H1 (cell line): ENCODE measurements at regions of chr1 and their contacts with region 1.

Region 1: GRCh38 chr1:27090911-27091310 is 64.0 kb downstream of the SLC9A1 start:
- DNase-seq: no peak
- H3K4me3 ChIP-seq: no peak overlapping the region
- H3K27ac ChIP-seq: no peak overlapping the region
- H3K4me1 ChIP-seq: no peaks in the 10 kb centered on the region
- H3K27me3 ChIP-seq: no peaks in the 10 kb centered on the region
- CTCF ChIP-seq: no peak
- EP300 ChIP-seq: no peak
- POLR2A ChIP-seq: no peak
- RAD21 ChIP-seq: no peak

Region 2: DNA sequence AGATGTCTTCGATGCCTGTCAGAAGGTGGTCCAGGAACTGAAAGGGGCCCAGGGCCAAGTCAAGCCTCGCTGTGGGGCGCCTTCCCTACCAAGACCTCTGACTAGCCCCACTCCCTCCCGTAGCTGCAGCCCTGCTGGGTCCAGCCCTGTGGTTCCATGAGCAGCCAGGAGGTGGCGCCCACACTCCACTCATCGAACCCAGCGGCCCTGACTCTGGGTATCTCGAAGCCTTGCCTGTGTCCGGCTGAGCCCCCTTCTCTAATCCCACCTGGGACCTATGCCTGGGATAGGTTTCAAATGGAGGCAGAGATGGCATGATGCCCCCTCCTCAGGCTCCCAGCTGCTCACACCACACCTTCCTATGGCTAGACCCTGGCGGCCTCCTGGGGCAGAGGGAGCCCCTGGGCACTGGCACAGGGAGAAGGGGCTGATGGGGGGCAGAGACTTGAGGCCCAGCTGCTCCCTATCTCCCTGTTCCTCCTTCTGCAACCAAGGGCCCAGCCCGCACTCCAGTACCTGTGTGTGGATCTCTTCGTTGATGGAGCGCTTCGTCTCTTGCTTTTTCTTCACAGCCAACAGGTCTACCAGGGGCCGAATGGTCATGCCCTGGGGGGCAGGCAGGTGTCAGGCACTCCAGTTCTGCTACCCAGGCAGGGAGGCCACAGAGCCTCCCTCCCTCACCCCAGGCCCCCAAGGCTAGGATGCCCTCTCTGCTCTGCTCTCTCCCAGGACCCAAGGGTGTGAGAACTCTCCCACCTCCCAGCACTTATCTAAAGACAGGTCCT is 12.0 kb after region 1 on chr1:
- CTCF ChIA-PET with region 1: interaction called, 19 read pairs
- POLR2A ChIA-PET with region 1: no interaction called
- DNase-seq: peak; percentile 49 to 100
- H3K4me3 ChIP-seq: no peak overlapping the region
- H3K27ac ChIP-seq: no peak overlapping the region
- H3K4me1 ChIP-seq: peaks cover 0 to 21% (median 14%) of the 10 kb centered on the region in 4 experiments; a peak in 6 of 7 replicates
- H3K27me3 ChIP-seq: no peaks in the 10 kb centered on the region
- CTCF ChIP-seq: peak in 2 of 3 experiments; percentile 97 to 99; a peak in 3 of 4 replicates
- EP300 ChIP-seq: no peak
- POLR2A ChIP-seq: no peak
- RAD21 ChIP-seq: peak; percentile 98 to 99